ENCODE measurements at regions of chr11 and their contacts with region 1.

Region 1: GRCh38 chr11:68370211-68371111 is 58.1 kb downstream of the LRP5 start:
- DNase-seq: no peak
- ATAC-seq: no peak

Region 2: GRCh38 chr11:68312117-68312779 is 58.2 kb before region 1 on chr11 and contains the start of gene LRP5:
- intact Hi-C with region 1: loop called (anchors 5 kb)
- DNase-seq: no peak
- ATAC-seq: no peak
- total RNA-seq, gene LRP5: 55.2 TPM

Region 3: GRCh38 chr11:68383976-68384501 is 13.6 kb after region 1 on chr11:
- intact Hi-C with region 1: no loop called
- DNase-seq: peak; percentile 87
- ATAC-seq: peak; percentile 21

Region 4: DNA sequence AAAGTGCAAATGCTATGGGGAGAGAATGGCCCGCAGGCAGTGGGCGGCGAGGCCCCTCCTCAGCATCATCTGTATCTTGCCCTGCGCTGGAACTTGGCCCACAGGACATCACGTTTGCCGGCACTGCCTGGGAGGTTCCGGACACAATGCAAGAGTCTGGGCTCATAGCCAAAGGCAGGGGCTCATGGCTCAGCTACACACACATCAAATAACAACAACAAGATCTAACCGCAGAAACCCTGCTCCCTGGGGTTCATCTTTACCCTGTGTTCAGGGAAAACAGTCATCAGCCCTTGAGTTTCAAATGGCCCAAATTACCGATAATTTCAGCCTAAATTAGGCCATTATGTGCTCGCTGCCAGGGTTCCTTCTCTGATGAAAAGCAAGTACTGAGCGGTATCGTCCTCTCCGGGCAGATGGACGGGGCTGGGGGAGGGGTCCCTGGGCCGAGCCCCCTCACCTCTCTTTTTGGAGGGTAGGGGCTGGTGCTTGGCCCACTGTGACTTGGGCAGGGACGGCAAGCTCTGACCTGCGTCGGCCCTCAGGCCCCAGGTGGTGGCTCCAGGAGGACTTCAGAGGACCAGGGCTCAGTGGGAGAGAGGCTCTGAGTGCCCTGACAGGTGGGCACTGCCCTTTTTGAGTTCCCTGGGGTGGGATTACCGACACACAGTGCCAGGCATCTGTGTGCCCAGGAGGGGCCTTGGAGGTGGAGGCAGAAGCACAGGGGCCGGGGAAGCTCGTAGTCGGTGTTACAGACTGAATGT is 288.9 kb after region 1 on chr11:
- intact Hi-C with region 1: no loop called
- DNase-seq: peak; percentile 91
- ATAC-seq: peak; percentile 93

Measured in sciatic nerve (tissue), 2 donors.